Mammary epithelial cell (primary cell): ENCODE measurements at regions of chr12 and their contacts with region 1.

Region 1: GRCh38 chr12:108731105-108731865 is at the start of gene CORO1C:
- DNase-seq: peak; percentile 95
- H3K4me3 ChIP-seq: peak within 1 kb of the TSS; percentile 87 to 99 (median 98)
- H3K27ac ChIP-seq: peak within 1 kb of the TSS; percentile 99
- H3K4me1 ChIP-seq: peaks cover 37% of the 10 kb centered on the region
- H3K27me3 ChIP-seq: no peaks in the 10 kb centered on the region
- CTCF ChIP-seq: peak; percentile 75 to 88
- total RNA-seq, gene CORO1C: 173 to 245 TPM

Region 2: GRCh38 chr12:108562348-108563135 is 168.7 kb before region 1 on chr12 and contains the start of gene ISCU:
- CTCF ChIA-PET with region 1: no interaction called
- dilution Hi-C with region 1: no loop called
- in situ Hi-C with region 1: no loop called
- intact Hi-C with region 1: loop called (anchors 2 kb)
- DNase-seq: peak; percentile 96
- H3K4me3 ChIP-seq: peak within 1 kb of the TSS; percentile 88
- H3K27ac ChIP-seq: peak within 1 kb of the TSS; percentile 93
- H3K4me1 ChIP-seq: peaks cover 30% of the 10 kb centered on the region
- H3K27me3 ChIP-seq: no peaks in the 10 kb centered on the region
- CTCF ChIP-seq: no peak
- total RNA-seq, gene ISCU: 55.3 to 77.6 TPM

Region 3: GRCh38 chr12:108691175-108691997 is 39.9 kb before region 1 on chr12:
- CTCF ChIA-PET with region 1: interaction called, 13 read pairs
- dilution Hi-C with region 1: no loop called
- in situ Hi-C with region 1: no loop called
- intact Hi-C with region 1: loop called (anchors 1 kb)
- DNase-seq: peak; percentile 100
- H3K4me3 ChIP-seq: peak overlapping the region; percentile 1 to 35 (median 6)
- H3K27ac ChIP-seq: peak overlapping the region; percentile 99
- H3K4me1 ChIP-seq: peaks cover 62% of the 10 kb centered on the region
- H3K27me3 ChIP-seq: no peaks in the 10 kb centered on the region
- CTCF ChIP-seq: peak; percentile 41 to 44

Region 4: GRCh38 chr12:108757856-108758255 is 26.6 kb after region 1 on chr12:
- CTCF ChIA-PET with region 1: no interaction called
- dilution Hi-C with region 1: no loop called
- in situ Hi-C with region 1: no loop called
- intact Hi-C with region 1: loop called (anchors 1 kb)
- DNase-seq: peak; percentile 61
- H3K4me3 ChIP-seq: no peak overlapping the region
- H3K27ac ChIP-seq: no peak overlapping the region
- H3K4me1 ChIP-seq: peaks cover 7% of the 10 kb centered on the region
- H3K27me3 ChIP-seq: no peaks in the 10 kb centered on the region
- CTCF ChIP-seq: no peak

Region 5: DNA sequence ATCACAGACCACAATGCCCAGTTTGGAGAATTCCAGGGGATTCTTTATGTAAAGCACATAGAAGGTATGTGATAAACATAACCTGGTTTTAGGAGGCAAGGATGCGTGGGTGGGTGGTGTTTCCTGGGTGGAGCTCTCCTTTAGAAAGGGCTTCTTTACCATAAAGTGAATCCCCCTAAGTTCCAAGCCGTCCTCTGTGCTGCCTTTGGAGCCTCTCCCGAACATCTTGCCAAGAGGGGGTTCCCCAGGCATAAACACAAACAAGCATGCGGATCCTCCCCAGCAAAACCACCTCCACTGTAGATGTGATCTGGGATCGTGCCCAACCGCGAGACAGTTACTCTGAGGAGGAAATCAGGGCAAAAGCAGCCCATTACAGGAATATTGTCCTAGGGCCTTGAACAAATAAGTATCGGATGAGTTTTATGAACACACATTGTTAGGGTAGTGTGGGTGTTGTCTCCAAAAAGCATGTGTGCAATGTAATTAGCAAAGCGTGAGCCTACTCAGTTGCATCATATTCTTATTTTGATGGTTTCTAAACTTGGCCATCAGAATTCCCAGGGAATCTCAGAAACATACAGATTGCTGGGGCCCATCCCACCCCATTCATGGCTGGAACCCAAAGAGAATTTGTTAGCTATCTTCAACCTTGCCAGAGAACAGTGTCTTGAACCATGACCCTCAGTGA is 48.9 kb after region 1 on chr12:
- CTCF ChIA-PET with region 1: no interaction called
- dilution Hi-C with region 1: loop called (anchors 5 kb)
- in situ Hi-C with region 1: no loop called
- intact Hi-C with region 1: no loop called
- DNase-seq: no peak
- H3K4me3 ChIP-seq: no peak overlapping the region
- H3K27ac ChIP-seq: no peak overlapping the region
- H3K4me1 ChIP-seq: no peaks in the 10 kb centered on the region
- H3K27me3 ChIP-seq: no peaks in the 10 kb centered on the region
- CTCF ChIP-seq: no peak

Region 6: DNA sequence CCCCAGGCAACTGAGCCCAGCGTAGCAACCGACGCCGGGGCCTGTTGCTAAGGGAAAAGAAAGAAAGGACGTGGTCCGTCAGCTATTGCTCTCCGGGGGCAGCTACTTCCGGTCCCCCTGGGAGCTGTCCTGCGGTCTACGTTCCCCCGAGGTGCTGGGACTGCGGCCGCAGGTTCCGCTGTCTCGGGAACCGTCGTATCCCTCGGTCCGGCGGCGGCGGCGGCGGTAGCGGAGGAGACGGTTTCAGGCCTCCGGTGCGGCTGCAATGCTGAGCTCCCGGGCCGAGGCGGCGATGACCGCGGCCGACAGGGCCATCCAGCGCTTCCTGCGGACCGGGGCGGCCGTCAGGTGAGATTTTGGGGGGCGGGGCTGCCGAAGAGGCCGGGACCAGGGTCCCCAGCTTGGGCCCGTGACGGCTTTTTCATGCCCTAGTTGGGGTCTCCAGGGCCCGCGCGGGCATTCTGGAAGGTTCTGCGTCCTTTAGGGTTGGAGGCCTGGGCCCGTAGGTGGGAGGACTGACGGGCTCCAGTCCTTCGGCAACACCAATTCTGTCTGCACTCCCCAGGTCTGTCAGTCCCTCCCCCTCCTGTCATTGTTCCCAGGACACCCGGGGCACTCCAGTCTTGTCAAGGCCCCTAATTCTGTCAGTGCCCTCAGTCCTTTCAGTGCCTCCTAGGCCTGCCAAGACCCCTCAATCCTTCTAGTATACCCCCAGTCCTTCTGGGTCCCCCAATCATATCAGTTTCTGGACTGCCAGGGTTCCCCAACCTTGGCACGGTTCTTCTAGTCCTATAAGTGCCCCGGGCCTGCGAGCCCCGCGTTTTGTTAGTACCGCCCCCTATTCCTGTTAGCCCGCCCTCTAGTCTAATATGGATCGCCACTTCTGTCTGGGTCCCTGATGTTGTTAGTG is 321.4 kb after region 1 on chr12 and contains the start of gene USP30:
- CTCF ChIA-PET with region 1: no interaction called
- dilution Hi-C with region 1: no loop called
- in situ Hi-C with region 1: no loop called
- intact Hi-C with region 1: no loop called
- DNase-seq: peak; percentile 71
- H3K4me3 ChIP-seq: peak within 1 kb of the TSS; percentile 70 to 80 (median 77)
- H3K27ac ChIP-seq: peak within 1 kb of the TSS; percentile 56
- H3K4me1 ChIP-seq: peaks cover 11% of the 10 kb centered on the region
- H3K27me3 ChIP-seq: no peaks in the 10 kb centered on the region
- CTCF ChIP-seq: no peak
- total RNA-seq, gene USP30: 10.0 to 13.5 TPM